MCF 10A (cell line): ENCODE measurements at regions of chr6 and their contacts with region 1.

Region 1: DNA sequence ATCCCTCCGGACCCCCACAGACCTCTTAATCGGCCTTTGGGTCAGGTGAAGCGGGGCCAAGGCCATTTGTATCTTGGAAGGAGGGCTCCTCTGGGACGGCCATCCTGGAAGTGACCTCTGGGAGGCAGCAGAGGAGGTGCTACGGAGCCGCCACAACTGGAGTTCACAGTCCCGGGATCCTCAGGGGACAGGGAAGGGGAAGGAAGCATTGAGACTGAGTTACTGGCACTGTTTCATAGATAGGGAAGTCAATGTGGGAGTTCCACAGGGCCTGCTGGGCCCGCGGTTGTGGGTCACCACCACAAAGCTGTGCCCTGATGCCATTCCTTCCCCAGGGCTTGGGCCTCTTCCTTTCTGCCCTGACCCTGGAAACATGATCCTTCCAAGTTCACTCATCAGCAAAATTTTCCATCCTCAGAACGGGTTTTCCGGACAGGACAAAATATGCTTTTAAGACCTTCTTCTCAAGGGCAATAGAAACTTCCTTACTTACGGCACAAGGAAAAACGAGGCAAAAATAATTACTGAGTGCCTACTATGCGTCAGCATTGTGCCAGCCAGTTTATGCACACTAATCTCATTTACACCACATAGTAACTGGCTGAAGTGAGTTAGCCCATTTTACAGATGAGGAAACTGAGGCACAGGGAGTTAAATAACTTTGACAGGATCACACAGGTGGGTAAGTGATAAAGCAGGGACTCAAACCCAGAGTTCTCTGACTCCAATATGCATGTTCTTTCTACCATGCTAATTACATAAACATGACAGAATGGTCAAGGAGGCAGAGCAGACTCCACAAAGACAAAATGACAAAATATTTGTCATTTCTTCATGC is 143.8 kb downstream of the UNC5CL start:
- DNase-seq: peak; percentile 71
- H3K4me3 Mint-ChIP-seq: no peak overlapping the region
- H3K27ac Mint-ChIP-seq: no peak overlapping the region
- H3K4me1 Mint-ChIP-seq: no peaks in the 10 kb centered on the region
- H3K27me3 Mint-ChIP-seq: peaks cover 27% of the 10 kb centered on the region
- CTCF ChIP-seq: peak; percentile 79

Region 2: GRCh38 chr6:40882323-40882997 is 12.7 kb before region 1 on chr6:
- CTCF ChIA-PET with region 1: interaction called, 12 read pairs
- POLR2A ChIA-PET with region 1: no interaction called
- intact Hi-C with region 1: no loop called
- DNase-seq: peak; percentile 11
- H3K4me3 Mint-ChIP-seq: no peak overlapping the region
- H3K27ac Mint-ChIP-seq: no peak overlapping the region
- H3K4me1 Mint-ChIP-seq: no peaks in the 10 kb centered on the region
- H3K27me3 Mint-ChIP-seq: peaks cover 28% of the 10 kb centered on the region
- CTCF ChIP-seq: no peak

Region 3: GRCh38 chr6:40912158-40912946 is 17.2 kb after region 1 on chr6:
- CTCF ChIA-PET with region 1: interaction called, 23 read pairs
- POLR2A ChIA-PET with region 1: no interaction called
- intact Hi-C with region 1: loop called (anchors 1 kb)
- DNase-seq: peak; percentile 89
- H3K4me3 Mint-ChIP-seq: no peak overlapping the region
- H3K27ac Mint-ChIP-seq: no peak overlapping the region
- H3K4me1 Mint-ChIP-seq: peaks cover 11% of the 10 kb centered on the region
- H3K27me3 Mint-ChIP-seq: no peaks in the 10 kb centered on the region
- CTCF ChIP-seq: peak; percentile 51

Region 4: GRCh38 chr6:40936818-40937251 is 41.7 kb after region 1 on chr6:
- CTCF ChIA-PET with region 1: no interaction called
- POLR2A ChIA-PET with region 1: no interaction called
- intact Hi-C with region 1: no loop called
- DNase-seq: no peak
- H3K4me3 Mint-ChIP-seq: no peak overlapping the region
- H3K27ac Mint-ChIP-seq: no peak overlapping the region
- H3K4me1 Mint-ChIP-seq: peaks cover 8% of the 10 kb centered on the region
- H3K27me3 Mint-ChIP-seq: no peaks in the 10 kb centered on the region
- CTCF ChIP-seq: no peak

Region 5: DNA sequence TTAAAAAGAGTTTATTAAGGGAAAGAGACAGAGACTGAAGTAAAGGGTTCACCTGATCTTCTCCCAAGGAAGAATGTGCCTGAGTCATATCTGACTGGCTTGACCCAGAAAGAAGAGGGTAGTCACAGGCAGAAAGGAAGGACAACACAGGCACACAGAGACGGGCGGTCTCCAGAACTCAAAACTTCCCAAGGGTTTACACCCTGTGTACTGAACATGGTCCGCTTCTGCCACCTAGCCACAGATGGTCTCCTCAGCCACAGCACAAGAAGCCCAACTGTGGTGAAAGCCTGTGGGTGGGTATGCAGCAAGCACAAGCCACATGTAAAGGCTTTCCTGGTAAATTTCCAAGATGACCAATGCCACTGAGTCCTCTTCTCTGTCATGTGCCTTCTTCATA is 126.7 kb after region 1 on chr6:
- CTCF ChIA-PET with region 1: interaction called, 36 read pairs
- POLR2A ChIA-PET with region 1: no interaction called
- intact Hi-C with region 1: loop called (anchors 1 kb)
- DNase-seq: peak; percentile 76
- H3K4me3 Mint-ChIP-seq: no peak overlapping the region
- H3K27ac Mint-ChIP-seq: peak overlapping the region; percentile 63
- H3K4me1 Mint-ChIP-seq: peaks cover 17% of the 10 kb centered on the region
- H3K27me3 Mint-ChIP-seq: no peaks in the 10 kb centered on the region
- CTCF ChIP-seq: peak; percentile 22

Region 6: DNA sequence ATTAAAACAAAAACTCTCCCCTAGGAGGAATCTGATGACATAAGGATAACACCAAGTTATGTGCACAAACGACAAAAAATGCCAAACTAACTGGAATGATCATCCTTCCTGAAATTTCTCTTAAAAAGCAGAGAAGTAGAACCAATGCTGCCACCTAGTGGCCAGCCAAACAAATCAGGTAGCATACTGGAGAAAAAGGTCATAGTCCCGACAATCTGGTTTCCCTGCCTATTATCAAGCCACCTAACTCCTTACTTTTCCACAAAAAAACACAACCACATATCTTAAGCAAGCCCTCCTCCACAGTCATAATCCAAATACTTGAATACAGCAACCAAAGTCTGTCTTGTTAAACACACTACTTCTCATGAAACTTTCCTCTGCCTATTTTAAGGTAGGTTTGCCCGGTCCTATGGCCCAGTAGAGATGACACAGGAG is 171.7 kb after region 1 on chr6:
- CTCF ChIA-PET with region 1: interaction called, 3 read pairs
- POLR2A ChIA-PET with region 1: no interaction called
- intact Hi-C with region 1: loop called (anchors 1 kb)
- DNase-seq: peak; percentile 75
- H3K4me3 Mint-ChIP-seq: no peak overlapping the region
- H3K27ac Mint-ChIP-seq: peak overlapping the region; percentile 79
- H3K4me1 Mint-ChIP-seq: peaks cover 15% of the 10 kb centered on the region
- H3K27me3 Mint-ChIP-seq: no peaks in the 10 kb centered on the region
- CTCF ChIP-seq: peak; percentile 70

Region 7: DNA sequence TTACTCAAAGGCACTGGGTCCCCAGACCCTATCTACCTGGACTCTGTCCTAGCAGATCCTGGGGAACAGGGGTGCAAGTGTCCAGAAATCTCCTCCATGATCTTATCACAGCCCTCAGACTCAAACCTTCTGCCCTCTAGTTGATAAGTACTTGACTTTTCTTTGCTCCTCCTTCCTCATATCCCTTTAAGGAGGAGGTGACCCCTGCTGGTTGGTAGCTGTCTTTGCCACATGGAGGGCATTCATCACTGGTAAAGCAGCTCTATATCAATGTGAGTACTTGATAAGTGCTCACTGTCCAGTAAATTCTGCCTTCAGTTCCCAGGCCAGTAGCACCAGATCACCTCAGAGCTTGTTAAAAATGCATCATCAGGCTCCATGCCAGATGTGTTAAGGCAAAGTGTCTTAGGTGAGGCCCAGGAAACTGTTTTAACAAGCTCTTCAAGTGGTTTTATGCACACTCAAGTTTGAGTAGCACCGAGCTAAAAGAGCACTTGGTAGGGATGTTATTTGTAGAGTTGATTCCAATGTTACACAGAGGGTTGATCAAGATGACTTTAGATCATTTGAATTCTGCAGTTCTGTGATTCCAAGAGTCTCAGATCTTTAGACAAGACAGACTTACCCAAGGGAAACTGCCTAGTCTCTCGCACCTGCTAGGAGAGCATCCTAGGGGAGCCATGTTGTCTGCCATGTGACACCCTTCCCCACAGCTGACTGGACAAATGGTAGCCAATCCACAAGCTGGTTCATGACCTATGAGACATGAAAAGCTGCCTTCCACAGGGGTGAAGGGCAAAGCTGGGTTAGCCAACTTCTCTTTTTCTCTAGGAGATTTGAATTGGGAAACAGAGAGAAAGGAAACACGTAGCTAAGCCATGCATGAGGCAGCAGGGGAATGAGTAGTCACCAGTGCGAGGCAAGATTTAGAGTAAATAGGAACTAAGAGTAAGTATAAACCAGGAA is 287.2 kb after region 1 on chr6:
- CTCF ChIA-PET with region 1: no interaction called
- POLR2A ChIA-PET with region 1: no interaction called
- intact Hi-C with region 1: loop called (anchors 1 kb)
- DNase-seq: peak; percentile 70
- H3K4me3 Mint-ChIP-seq: no peak overlapping the region
- H3K27ac Mint-ChIP-seq: no peak overlapping the region
- H3K4me1 Mint-ChIP-seq: no peaks in the 10 kb centered on the region
- H3K27me3 Mint-ChIP-seq: peaks cover 17% of the 10 kb centered on the region
- CTCF ChIP-seq: peak; percentile 56